ENCODE measurements at regions of chr10 and their contacts with region 1.

Region 1: GRCh38 chr10:12348870-12349628 is at the start of gene CAMK1D:
- DNase-seq: peak; percentile 83 to 94
- ATAC-seq: peak; percentile 71 to 83 (median 71)
- H3K4me3 ChIP-seq: peak within 1 kb of the TSS; percentile 76
- H3K4me3 Mint-ChIP-seq: peak within 1 kb of the TSS; percentile 98
- H3K27ac ChIP-seq: peak within 1 kb of the TSS; percentile 72
- H3K27ac Mint-ChIP-seq: peak within 1 kb of the TSS; percentile 87 to 97
- H3K4me1 ChIP-seq: peaks cover 18% of the 10 kb centered on the region
- H3K4me1 Mint-ChIP-seq: peaks cover 53 to 62% of the 10 kb centered on the region in 2 donors
- H3K27me3 ChIP-seq: no peaks in the 10 kb centered on the region
- H3K27me3 Mint-ChIP-seq: no peaks in the 10 kb centered on the region
- CTCF ChIP-seq: peak; percentile 23
- total RNA-seq, gene CAMK1D: 44.2 to 56.4 (median 49.7) TPM

Region 2: DNA sequence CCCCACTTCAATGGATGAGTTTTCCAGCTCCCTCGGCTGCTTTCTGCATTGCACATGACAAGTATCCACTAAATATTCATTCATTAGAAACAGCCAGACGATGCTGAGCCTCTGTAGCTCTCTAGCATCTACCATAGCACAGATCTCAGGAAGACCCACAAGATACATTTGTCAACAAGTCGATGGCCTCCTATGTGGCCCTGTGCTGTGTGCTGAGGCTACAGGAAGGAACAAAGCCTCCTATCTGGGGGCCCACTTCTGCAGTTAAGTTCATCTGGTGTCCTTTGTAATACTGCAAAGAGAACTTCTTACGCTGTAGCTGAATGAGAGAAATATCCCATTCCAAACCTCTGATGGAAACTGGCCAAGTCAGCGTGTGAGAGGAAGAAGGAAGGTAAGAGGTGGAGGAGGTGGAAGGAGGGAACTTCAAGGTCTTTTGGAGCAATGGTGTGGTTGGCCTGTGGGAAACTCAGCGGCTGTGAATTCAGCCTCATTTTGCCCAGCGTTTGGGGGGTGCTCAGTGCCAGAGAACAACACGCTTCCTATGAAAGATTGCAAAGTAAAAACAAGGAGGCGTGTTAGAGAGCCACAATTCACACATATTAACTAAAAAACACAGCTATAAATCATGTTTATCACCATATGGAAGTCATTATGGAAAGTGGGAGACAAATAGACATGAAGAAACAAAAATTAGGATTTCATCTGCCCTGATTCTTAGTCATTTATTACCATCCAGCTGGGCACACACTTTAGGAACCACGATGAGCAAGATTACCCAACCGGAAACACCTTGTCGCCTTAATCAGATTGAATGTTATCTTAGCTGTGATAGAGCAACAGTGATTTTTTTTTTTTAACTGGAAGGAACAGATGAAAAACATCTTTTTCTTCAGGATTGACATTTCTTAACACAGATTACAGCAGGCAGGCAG is 675.4 kb before region 1 on chr10:
- intact Hi-C with region 1: no loop called
- DNase-seq: no peak
- ATAC-seq: no peak
- H3K4me3 ChIP-seq: no peak overlapping the region
- H3K4me3 Mint-ChIP-seq: no peak overlapping the region
- H3K27ac ChIP-seq: no peak overlapping the region
- H3K27ac Mint-ChIP-seq: no peak overlapping the region
- H3K4me1 ChIP-seq: peaks cover 19% of the 10 kb centered on the region
- H3K4me1 Mint-ChIP-seq: peaks cover 0 to 8% of the 10 kb centered on the region in 2 donors
- H3K27me3 ChIP-seq: no peaks in the 10 kb centered on the region
- H3K27me3 Mint-ChIP-seq: peaks cover 0 to 12% of the 10 kb centered on the region in 2 donors
- CTCF ChIP-seq: no peak

Region 3: DNA sequence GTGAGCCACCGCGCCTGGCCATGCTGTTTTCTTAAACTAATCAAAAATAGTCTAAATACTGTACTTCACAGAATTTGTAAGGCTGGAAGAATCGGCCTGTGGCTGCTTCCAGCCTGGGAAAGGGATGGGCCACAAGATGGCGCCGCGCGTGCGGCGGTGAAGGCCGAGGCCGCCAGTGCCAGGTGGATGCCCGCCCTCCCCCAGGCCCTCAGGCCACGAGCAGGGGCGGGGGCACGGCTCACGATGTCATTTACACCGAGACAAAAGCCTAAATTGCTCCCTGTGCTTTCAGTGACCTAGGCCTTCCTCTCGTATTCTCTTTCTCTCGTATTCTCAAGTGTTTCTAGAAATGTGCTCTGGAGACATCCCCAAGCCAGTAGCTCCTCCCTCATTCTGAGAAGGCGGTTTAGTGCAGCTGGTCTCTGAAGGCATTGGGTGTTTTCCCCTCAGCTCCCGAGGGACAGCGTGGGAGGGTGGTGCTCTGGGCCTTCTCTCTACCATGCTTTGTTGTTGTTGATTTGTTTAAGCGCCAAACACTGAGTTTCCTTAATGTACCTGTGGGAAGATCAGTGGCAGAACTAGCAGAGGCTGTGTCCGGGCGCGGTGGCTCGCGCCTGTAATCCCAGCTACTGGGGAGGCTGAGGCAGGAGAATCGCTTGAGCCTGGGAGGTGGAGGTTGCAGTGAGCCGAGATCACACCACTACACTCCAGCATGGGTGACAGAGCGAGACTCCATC is 84.7 kb before region 1 on chr10:
- intact Hi-C with region 1: loop called (anchors 2 kb)
- DNase-seq: peak; percentile 51 to 82
- ATAC-seq: peak; percentile 41 to 69 (median 51)
- H3K4me3 ChIP-seq: no peak overlapping the region
- H3K4me3 Mint-ChIP-seq: peak overlapping the region; percentile 55
- H3K27ac ChIP-seq: peak overlapping the region; percentile 91
- H3K27ac Mint-ChIP-seq: peak overlapping the region in 1 of 2 donors; percentile 60
- H3K4me1 ChIP-seq: peaks cover 46% of the 10 kb centered on the region
- H3K4me1 Mint-ChIP-seq: peaks cover 25 to 30% of the 10 kb centered on the region in 2 donors
- H3K27me3 ChIP-seq: peaks cover 5% of the 10 kb centered on the region
- H3K27me3 Mint-ChIP-seq: peaks cover 18 to 25% of the 10 kb centered on the region in 2 donors
- CTCF ChIP-seq: peak; percentile 57

Region 4: GRCh38 chr10:12369982-12370381 is 20.9 kb after region 1 on chr10:
- intact Hi-C with region 1: loop called (anchors 1 kb)
- DNase-seq: no peak
- ATAC-seq: no peak
- H3K4me3 ChIP-seq: no peak overlapping the region
- H3K4me3 Mint-ChIP-seq: no peak overlapping the region
- H3K27ac ChIP-seq: no peak overlapping the region
- H3K27ac Mint-ChIP-seq: no peak overlapping the region
- H3K4me1 ChIP-seq: peaks cover 19% of the 10 kb centered on the region
- H3K4me1 Mint-ChIP-seq: peaks cover 15 to 16% of the 10 kb centered on the region in 2 donors
- H3K27me3 ChIP-seq: no peaks in the 10 kb centered on the region
- H3K27me3 Mint-ChIP-seq: no peaks in the 10 kb centered on the region
- CTCF ChIP-seq: no peak

Region 5: DNA sequence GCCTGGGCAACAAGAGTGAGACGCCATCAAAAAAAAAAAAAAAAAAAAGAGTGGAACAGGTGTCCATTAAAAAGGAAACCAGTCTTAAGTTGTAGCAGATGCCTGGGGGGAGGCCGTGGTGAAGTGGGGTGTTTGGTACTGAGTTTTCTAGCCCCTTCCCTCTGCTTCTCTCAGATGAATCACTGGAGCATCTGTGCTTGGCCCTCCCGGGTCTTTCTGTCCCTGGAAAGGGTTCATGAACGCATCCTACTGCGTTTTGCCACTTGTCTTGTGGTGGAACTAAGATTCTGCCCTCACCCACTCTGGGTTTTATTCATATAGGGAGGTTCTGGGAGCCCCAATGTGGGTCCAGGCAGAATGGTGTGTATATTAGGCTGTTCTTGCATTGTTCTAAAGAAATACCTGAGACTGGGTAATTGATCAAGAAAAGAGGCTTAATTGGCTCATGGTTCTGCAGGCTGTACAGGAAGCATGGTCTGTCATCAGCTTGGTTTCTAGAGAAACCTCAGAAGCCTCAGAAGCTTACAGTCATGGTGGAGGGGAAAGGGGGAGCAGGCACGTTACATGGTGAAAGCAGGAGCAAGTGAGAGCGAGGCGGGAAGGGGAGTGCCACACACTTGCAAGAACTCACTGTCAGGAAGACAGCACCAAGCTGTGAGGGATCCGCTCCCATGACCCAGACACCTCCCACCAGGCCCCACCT is 63.8 kb after region 1 on chr10:
- intact Hi-C with region 1: loop called (anchors 1 kb)
- DNase-seq: peak; percentile 26 to 68
- ATAC-seq: peak; percentile 77 to 89 (median 79)
- H3K4me3 ChIP-seq: no peak overlapping the region
- H3K4me3 Mint-ChIP-seq: no peak overlapping the region
- H3K27ac ChIP-seq: no peak overlapping the region
- H3K27ac Mint-ChIP-seq: peak overlapping the region in 1 of 2 donors; percentile 62
- H3K4me1 ChIP-seq: peaks cover 8% of the 10 kb centered on the region
- H3K4me1 Mint-ChIP-seq: peaks cover 25 to 26% of the 10 kb centered on the region in 2 donors
- H3K27me3 ChIP-seq: no peaks in the 10 kb centered on the region
- H3K27me3 Mint-ChIP-seq: no peaks in the 10 kb centered on the region
- CTCF ChIP-seq: no peak

Region 6: GRCh38 chr10:12513775-12514673 is 165.0 kb after region 1 on chr10:
- intact Hi-C with region 1: loop called (anchors 10 kb)
- DNase-seq: peak in 1 of 2 donors; percentile 24
- ATAC-seq: peak; percentile 80 to 90 (median 89)
- H3K4me3 ChIP-seq: no peak overlapping the region
- H3K4me3 Mint-ChIP-seq: peak overlapping the region; percentile 81
- H3K27ac ChIP-seq: peak overlapping the region; percentile 51
- H3K27ac Mint-ChIP-seq: peak overlapping the region; percentile 83 to 87
- H3K4me1 ChIP-seq: peaks cover 53% of the 10 kb centered on the region
- H3K4me1 Mint-ChIP-seq: peaks cover 59 to 63% of the 10 kb centered on the region in 2 donors
- H3K27me3 ChIP-seq: no peaks in the 10 kb centered on the region
- H3K27me3 Mint-ChIP-seq: no peaks in the 10 kb centered on the region
- CTCF ChIP-seq: no peak

Measured in natural killer cell (primary cell).